ENCODE measurements at regions of chr10 and their contacts with region 1.

Region 1: GRCh38 chr10:11986593-11987216 is 55.9 kb downstream of the UPF2 start:
- H3K4me3 ChIP-seq: no peak overlapping the region
- H3K27ac ChIP-seq: no peak overlapping the region
- H3K4me1 ChIP-seq: no peaks in the 10 kb centered on the region
- CTCF ChIP-seq: peak; percentile 57; the same call in 1 of the 2 replicates

Region 2: DNA sequence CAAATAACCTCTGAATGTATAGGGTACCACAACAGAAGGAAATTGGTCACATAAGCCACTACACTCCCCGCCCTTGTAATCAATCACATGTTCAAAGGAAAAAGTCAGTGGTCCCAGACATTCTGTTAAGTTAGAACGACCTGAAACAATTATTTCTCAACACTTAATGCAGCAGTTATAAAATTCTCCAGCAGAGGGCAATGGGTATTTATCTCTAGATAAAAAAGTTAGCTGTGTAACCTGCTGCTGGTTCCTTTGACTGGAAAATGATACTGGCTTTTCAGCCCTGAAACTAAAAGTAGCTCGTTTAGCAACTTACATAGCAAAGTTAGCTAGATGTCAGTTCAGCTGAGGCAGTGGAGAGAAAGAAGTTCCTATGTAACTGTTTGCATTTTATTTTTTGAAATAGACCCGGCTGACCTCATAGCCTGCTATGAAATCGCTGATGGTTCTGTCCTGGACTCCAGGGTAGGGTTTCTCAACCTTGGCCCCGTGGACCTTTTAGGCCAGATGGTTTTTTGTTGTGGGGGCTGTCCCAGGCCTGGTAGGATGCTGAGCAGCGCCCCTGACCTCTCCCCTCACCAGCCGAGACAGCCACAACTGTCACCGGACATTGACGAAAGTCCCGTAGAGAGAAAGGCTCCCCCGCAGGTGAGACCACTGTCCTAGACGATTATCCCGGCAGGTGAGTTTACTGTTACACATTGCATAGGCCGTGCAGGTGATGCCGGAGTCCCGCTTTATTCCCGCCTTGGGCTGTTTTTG is 203.7 kb before region 1 on chr10:
- CTCF ChIA-PET with region 1: interaction called, 44 read pairs
- POLR2A ChIA-PET with region 1: interaction called, 4 read pairs
- H3K4me3 ChIP-seq: no peak overlapping the region
- H3K27ac ChIP-seq: no peak overlapping the region
- H3K4me1 ChIP-seq: no peaks in the 10 kb centered on the region
- CTCF ChIP-seq: peak; percentile 41

Region 3: GRCh38 chr10:11793762-11794479 is 192.8 kb before region 1 on chr10:
- CTCF ChIA-PET with region 1: interaction called, 34 read pairs
- POLR2A ChIA-PET with region 1: no interaction called
- H3K4me3 ChIP-seq: no peak overlapping the region
- H3K27ac ChIP-seq: no peak overlapping the region
- H3K4me1 ChIP-seq: no peaks in the 10 kb centered on the region
- CTCF ChIP-seq: no peak

Region 4: DNA sequence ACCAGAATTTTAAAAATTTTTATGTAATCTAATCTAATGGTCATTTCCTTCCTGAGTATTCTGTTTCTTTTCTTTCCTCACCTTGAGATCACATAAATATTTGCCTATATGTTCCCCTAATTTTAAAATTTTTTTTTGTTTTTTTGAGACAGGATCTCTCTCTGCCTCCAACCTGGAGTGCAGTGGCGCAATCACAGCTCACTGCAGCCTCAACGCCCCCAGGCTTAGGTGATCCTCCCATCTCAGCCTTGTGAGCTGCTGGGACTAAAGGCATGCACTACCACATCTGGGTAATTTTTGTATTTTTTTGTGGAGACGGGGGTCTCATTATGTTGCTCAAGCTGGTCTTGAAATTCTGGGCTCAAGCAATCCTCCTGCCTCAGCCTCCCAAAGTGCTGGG is 167.7 kb before region 1 on chr10:
- CTCF ChIA-PET with region 1: interaction called, 12 read pairs
- POLR2A ChIA-PET with region 1: no interaction called
- H3K4me3 ChIP-seq: no peak overlapping the region
- H3K27ac ChIP-seq: no peak overlapping the region
- H3K4me1 ChIP-seq: 0 out of 2 replicates have a peak, but pooled peaks cover under 1% of the 10 kb centered on the region
- CTCF ChIP-seq: no peak

Region 5: DNA sequence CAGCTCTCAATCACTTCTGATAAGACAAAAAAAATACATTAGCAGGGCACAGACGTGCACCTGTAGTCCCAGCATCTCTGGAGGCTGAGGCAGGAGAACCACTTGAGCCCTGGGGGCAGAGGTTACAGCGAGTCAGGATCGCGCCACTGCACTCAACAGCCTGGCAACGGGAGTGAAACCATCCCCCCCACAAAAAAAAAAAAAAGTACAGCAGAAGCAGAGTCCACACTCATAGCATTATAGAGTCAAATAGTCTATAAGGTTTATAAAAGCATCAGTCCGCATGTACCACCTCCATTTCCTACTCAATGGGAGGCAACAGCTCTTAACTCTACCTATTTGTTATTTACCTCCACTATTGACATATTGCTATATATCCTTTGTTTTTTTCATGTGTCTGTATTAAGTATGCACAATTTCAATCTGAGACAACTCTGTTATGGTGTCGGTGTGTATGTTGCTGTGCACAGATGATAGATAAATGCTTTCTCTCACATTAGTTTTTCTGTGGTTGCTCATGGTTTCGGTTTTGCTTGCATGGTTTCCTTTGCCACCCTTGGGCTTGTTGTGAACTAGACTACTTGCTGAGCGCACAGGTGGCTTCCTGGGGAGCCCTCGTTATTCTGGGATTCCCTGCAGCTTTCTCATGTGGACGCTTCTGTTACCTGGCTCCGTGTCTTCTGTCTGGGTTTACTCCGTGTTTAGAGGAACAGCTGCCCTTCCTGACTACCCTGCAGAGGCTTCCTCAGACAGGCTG is 123.2 kb before region 1 on chr10:
- CTCF ChIA-PET with region 1: interaction called, 10 read pairs
- POLR2A ChIA-PET with region 1: no interaction called
- H3K4me3 ChIP-seq: no peak overlapping the region
- H3K27ac ChIP-seq: no peak overlapping the region
- H3K4me1 ChIP-seq: no peaks in the 10 kb centered on the region
- CTCF ChIP-seq: no peak

Region 6: GRCh38 chr10:11962176-11962575 is 24.5 kb before region 1 on chr10:
- CTCF ChIA-PET with region 1: interaction called, 10 read pairs
- POLR2A ChIA-PET with region 1: no interaction called
- H3K4me3 ChIP-seq: no peak overlapping the region
- H3K27ac ChIP-seq: no peak overlapping the region
- H3K4me1 ChIP-seq: no peaks in the 10 kb centered on the region
- CTCF ChIP-seq: no peak

Region 7: DNA sequence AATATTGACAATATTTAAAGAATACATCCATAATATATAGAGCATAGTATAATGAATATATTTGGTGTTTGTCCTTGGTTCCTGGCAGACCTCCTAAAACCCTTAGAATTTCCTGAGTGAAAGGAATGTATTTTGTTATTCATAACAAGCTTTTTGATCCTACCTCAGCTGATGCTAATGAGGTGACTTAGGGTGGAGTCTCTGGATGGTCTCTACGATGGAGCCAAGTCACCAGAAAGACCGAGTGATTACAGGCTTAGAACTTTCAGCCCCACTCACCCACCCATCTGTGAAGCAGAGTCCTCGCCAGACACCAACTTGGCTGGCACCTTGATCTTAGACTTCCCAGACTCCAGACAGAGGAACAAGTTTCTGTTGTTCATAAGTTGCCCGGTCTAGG is 20.0 kb after region 1 on chr10:
- CTCF ChIA-PET with region 1: interaction called, 19 read pairs
- POLR2A ChIA-PET with region 1: no interaction called
- H3K4me3 ChIP-seq: no peak overlapping the region
- H3K27ac ChIP-seq: no peak overlapping the region
- H3K4me1 ChIP-seq: no peaks in the 10 kb centered on the region
- CTCF ChIP-seq: no peak

Region 8: DNA sequence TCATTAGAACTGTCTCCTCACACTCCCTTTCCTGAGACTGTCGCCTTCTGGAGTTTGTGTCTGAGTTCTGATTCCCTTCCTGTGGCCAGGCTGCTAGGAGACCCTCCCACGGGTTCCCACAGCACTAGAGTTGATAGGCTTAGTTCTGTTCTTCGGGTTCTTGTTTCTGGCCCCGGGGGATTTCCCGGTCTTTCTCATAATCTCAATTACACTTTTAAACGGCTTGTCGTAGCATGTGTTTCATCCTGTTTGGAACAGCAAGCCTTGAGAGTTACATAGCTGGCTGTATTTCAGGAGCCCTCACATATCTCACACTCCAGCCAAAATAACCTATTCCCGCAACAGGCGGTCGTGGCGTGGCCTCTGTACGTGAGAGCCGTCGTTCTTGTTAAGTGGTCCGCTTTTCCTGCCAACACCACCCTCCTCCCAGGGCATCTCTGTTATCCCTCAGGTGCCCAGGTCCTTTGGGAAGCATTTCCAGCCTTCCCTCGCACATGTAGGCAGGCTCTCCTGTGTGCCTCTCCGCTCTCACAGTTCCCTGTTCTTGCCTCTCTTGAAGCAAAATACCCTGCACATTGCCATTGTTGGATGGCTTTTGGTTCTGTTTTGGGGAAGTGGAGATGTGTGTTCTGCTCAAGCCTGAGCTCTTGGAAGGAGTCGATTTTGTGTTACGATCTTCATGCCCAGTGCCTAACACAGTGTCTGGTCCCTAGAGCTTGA is 255.3 kb after region 1 on chr10:
- CTCF ChIA-PET with region 1: no interaction called
- POLR2A ChIA-PET with region 1: no interaction called
- H3K4me3 ChIP-seq: no peak overlapping the region
- H3K27ac ChIP-seq: no peak overlapping the region
- H3K4me1 ChIP-seq: no peaks in the 10 kb centered on the region
- CTCF ChIP-seq: no peak